Panc1 (cell line): ENCODE measurements at regions of chr15 and their contacts with region 1.

Region 1: DNA sequence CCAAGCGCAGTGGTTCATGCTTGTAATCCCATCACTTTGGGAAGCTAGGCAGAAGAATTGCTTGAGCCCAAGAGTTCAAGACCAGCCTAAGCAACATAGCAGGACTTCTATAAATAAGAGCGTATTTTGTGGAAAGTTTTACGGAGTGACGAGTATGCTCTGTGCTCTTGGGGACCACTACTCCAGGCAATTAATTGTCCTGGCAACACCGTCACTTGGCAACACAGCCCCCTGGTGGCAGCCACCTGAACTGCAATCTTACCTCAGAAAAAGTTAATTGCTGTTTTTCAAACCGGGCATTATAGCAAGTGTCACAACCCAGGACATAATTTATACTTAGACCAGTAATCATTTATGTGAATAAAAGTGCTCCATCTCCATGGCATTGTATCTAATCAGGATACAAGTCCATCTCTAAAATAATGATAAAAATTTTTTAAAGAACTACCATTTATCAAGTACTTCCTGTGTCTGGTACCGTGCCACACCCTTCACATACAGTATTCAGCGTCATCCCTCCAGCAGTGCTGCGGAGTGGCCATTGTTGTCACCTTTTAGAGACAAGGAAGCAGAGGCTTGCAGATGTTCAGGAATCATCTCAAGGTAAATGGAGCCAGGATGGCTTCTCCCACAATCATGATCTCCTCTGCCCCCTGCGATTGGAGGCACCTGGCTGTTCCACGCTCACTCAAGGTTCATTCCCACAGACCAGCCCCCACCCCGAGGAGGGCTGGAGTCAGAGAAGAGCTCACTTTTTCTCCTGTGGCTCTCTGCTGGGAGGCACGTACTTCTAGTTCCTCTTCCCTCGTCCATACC is 34.5 kb downstream of the PLA2G4D start:
- DNase-seq: peak; percentile 47
- ATAC-seq: no peak
- H3K4me3 ChIP-seq: no peak overlapping the region
- H3K27ac ChIP-seq: no peak overlapping the region
- H3K4me1 ChIP-seq: no peaks in the 10 kb centered on the region; the same call in 1 of the 2 replicates
- H3K27me3 ChIP-seq: 0 out of 2 replicates have a peak, but pooled peaks cover 2% of the 10 kb centered on the region
- CTCF ChIP-seq: peak; percentile 96

Region 2: GRCh38 chr15:41125931-41126642 is 933.8 kb before region 1 on chr15:
- CTCF ChIA-PET with region 1: no interaction called
- POLR2A ChIA-PET with region 1: no interaction called
- in situ Hi-C with region 1: no loop called
- intact Hi-C with region 1: no loop called
- DNase-seq: no peak
- ATAC-seq: no peak
- H3K4me3 ChIP-seq: no peak overlapping the region
- H3K27ac ChIP-seq: no peak overlapping the region
- H3K4me1 ChIP-seq: no peaks in the 10 kb centered on the region
- H3K27me3 ChIP-seq: no peaks in the 10 kb centered on the region
- CTCF ChIP-seq: no peak

Region 3: DNA sequence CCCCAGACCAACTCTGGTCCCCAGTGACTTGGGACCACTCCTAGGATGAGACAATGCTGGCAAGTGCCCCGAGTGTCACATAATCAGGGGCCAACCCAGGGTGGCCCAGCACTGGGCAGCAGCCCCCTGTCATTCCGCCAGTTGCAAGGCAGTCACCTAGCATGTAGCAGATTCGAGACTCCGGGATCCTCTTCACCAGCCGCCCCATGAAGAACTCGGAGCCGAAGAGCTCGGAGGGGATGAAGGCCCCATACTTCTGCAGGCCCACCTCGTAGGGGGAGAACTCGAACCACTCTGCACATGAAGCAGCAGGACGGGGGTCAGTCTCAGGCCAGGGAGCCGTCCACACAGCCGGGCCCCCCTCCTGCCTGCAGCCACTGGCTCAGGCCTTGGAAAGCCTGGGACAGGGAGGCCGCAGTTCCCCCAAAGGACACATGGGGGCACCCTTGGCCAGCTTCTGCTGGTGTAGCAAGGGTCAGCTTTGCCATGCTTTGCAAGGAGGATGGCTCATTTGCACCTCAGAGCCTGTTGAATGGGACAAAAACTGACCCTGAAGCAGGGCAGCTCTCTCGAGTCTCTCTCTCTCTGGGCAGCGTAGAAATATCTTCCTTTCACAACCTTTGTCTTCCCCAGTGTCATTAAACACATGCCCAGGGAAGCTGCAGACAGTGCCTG is 70.5 kb before region 1 on chr15:
- CTCF ChIA-PET with region 1: interaction called, 9 read pairs
- POLR2A ChIA-PET with region 1: interaction called, 3 read pairs
- in situ Hi-C with region 1: no loop called
- intact Hi-C with region 1: loop called (anchors 2 kb)
- DNase-seq: peak; percentile 70
- ATAC-seq: peak; percentile 96
- H3K4me3 ChIP-seq: no peak overlapping the region
- H3K27ac ChIP-seq: no peak overlapping the region
- H3K4me1 ChIP-seq: no peaks in the 10 kb centered on the region; the same call in 1 of the 2 replicates
- H3K27me3 ChIP-seq: no peaks in the 10 kb centered on the region
- CTCF ChIP-seq: peak; percentile 97

Region 4: GRCh38 chr15:42010434-42010833 is 49.4 kb before region 1 on chr15:
- CTCF ChIA-PET with region 1: interaction called, 10 read pairs
- POLR2A ChIA-PET with region 1: no interaction called
- in situ Hi-C with region 1: no loop called
- intact Hi-C with region 1: no loop called
- DNase-seq: no peak
- ATAC-seq: peak; percentile 40; the same call in 1 of the 2 replicates
- H3K4me3 ChIP-seq: no peak overlapping the region
- H3K27ac ChIP-seq: no peak overlapping the region
- H3K4me1 ChIP-seq: no peaks in the 10 kb centered on the region
- H3K27me3 ChIP-seq: peaks cover 3% of the 10 kb centered on the region; the same call in 1 of the 2 replicates
- CTCF ChIP-seq: no peak

Region 5: DNA sequence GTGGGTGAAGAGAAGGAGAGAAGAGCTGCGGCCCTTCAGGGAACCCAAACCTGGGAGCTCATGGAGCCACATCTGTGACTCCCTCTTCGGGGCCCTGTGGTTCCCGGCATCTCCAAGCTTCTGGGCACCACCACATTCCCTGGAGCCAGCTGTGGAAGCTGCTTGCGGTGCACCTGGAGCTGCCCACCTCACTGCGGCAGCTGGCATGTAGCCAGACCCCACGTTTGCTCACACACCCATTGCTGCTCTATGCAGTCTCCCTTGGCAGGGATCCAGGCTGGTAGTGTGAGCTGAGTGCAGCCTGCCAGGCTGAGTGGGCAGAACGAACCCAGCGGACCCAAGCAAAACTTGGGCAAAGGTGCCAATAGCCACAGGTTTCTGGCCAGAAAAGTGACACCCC is 22.2 kb before region 1 on chr15:
- CTCF ChIA-PET with region 1: no interaction called
- POLR2A ChIA-PET with region 1: no interaction called
- in situ Hi-C with region 1: no loop called
- intact Hi-C with region 1: no loop called
- DNase-seq: no peak
- ATAC-seq: no peak
- H3K4me3 ChIP-seq: no peak overlapping the region
- H3K27ac ChIP-seq: no peak overlapping the region
- H3K4me1 ChIP-seq: no peaks in the 10 kb centered on the region
- H3K27me3 ChIP-seq: no peaks in the 10 kb centered on the region
- CTCF ChIP-seq: no peak

Region 6: GRCh38 chr15:42133886-42134502 is 74.1 kb after region 1 on chr15:
- CTCF ChIA-PET with region 1: no interaction called
- POLR2A ChIA-PET with region 1: no interaction called
- in situ Hi-C with region 1: no loop called
- intact Hi-C with region 1: no loop called
- DNase-seq: peak; percentile 28
- ATAC-seq: peak; percentile 83
- H3K4me3 ChIP-seq: no peak overlapping the region
- H3K27ac ChIP-seq: no peak overlapping the region
- H3K4me1 ChIP-seq: no peaks in the 10 kb centered on the region
- H3K27me3 ChIP-seq: peaks cover 6% of the 10 kb centered on the region
- CTCF ChIP-seq: peak; percentile 91

Region 7: GRCh38 chr15:42575188-42576039 is 515.5 kb after region 1 on chr15 and contains the start of gene STARD9:
- CTCF ChIA-PET with region 1: no interaction called
- POLR2A ChIA-PET with region 1: no interaction called
- in situ Hi-C with region 1: no loop called
- intact Hi-C with region 1: no loop called
- DNase-seq: peak; percentile 88
- ATAC-seq: peak; percentile 97
- H3K4me3 ChIP-seq: peak within 1 kb of the TSS; percentile 81 to 90
- H3K27ac ChIP-seq: peak within 1 kb of the TSS; percentile 90
- H3K4me1 ChIP-seq: peaks cover 15% of the 10 kb centered on the region
- H3K27me3 ChIP-seq: no peaks in the 10 kb centered on the region
- CTCF ChIP-seq: no peak
- total RNA-seq, gene STARD9: 13.4 TPM